ENCODE measurements at regions of chr3 and their contacts with region 1.

Region 1: GRCh38 chr3:183884427-183885296 is at the start of gene PARL:
- DNase-seq: peak; percentile 86 to 98
- H3K4me3 ChIP-seq: peak within 1 kb of the TSS; percentile 96
- H3K27ac ChIP-seq: peak within 1 kb of the TSS; percentile 33
- H3K4me1 ChIP-seq: peaks cover 15% of the 10 kb centered on the region
- H3K27me3 ChIP-seq: no peaks in the 10 kb centered on the region
- CTCF ChIP-seq: peak; percentile 97
- total RNA-seq, gene PARL: 109 and 180 TPM in 2 replicates

Region 2: DNA sequence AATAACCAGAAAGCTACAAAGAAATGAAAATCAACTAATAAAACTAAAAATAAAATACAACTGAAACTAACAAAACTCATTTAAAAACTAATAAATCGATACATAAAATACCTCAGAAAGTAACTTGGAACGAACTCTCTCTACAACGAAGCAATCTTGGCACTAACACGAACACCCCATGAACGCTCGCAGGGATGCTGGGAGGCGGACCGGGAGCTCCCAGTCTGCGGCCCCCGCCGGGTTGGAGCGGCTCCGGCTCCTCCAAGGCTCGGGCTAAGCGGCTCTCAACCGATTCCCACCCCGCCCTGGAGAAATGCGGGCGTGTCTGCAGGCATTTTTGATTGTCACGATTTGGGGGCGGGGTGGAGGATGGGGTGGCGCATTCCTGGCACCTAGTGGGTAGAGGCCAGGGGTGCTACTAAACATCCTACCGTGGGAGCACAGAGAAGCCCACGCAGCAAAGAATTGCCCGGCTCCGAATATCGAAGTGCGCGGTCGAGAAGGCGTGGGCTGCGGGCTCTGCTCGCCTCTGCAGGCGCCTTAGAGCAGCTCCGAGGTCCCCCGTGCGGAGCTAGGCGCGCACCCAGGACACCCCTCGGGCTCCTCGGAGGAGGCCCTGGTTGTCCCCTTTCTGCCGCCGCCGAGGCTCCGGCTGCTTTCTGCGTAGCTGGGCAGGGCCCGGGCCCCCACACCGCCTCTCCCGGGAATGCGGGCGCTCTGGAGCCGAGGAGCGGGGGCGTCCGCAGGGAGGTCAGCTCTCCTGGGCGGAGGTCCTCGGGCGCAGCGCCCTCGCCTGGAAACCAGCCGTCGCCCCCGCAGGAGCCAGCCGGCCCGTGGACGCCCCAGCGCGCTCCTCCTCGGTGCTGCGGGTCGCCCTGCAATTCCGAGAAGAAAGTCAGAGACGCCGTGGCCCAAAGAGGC is 705.8 kb before region 1 on chr3:
- CTCF ChIA-PET with region 1: no interaction called
- POLR2A ChIA-PET with region 1: no interaction called
- intact Hi-C with region 1: loop called (anchors 1 kb)
- DNase-seq: peak; percentile 52 to 73
- H3K4me3 ChIP-seq: peak overlapping the region; percentile 71
- H3K27ac ChIP-seq: no peak overlapping the region
- H3K4me1 ChIP-seq: no peaks in the 10 kb centered on the region; the same call in 1 of the 2 replicates
- H3K27me3 ChIP-seq: no peaks in the 10 kb centered on the region
- CTCF ChIP-seq: peak; percentile 52; the same call in 1 of the 2 replicates

Region 3: DNA sequence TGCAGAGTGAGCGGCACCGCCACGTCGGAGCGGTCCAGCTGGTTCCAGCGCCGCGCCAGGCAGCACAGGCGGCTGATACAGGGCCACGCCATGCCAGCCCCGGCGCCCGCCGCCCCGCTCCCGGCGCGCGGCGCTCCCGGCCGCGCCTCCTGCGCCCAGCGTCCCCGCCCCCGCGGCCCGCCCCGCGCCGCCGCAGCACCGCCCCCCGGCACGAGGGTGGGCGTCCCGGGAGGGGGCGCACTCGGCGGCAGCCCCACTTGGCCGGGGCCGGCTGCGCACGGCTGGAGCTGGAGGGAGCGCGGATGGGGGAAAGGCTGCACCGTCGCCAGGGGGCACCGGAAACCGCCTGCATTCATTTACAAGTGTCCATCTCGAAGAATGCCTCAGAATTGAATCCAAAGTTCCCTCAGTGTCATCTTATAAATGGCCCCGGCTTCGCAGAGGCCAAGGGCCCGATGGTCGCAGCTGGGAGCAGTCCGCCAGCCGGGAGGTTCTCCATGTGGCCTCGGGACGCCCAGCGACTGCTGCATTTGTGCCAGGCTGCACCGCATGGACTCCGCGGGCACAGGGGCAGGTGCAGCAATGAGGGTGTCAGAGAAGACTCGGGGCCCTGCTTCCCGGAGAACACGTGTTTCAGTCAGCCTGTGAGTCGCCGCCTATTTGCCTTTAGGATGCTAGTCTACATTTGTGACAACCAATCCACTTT is 59.1 kb before region 1 on chr3 and contains the start of gene MAP6D1:
- CTCF ChIA-PET with region 1: no interaction called
- POLR2A ChIA-PET with region 1: no interaction called
- intact Hi-C with region 1: loop called (anchors 2 kb)
- DNase-seq: peak in 1 of 2 experiments; percentile 72
- H3K4me3 ChIP-seq: peak within 1 kb of the TSS; percentile 59; the same call in 1 of the 2 replicates
- H3K27ac ChIP-seq: no peak within 1 kb of the TSS
- H3K4me1 ChIP-seq: 0 out of 2 replicates have a peak, but pooled peaks cover 7% of the 10 kb centered on the region
- H3K27me3 ChIP-seq: no peaks in the 10 kb centered on the region
- CTCF ChIP-seq: no peak; the same call in 1 of the 2 replicates
- total RNA-seq, gene MAP6D1: 2.2 TPM in 2 replicates

Region 4: GRCh38 chr3:183844606-183845005 is 40.1 kb before region 1 on chr3:
- CTCF ChIA-PET with region 1: interaction called, 15 read pairs
- POLR2A ChIA-PET with region 1: no interaction called
- intact Hi-C with region 1: no loop called
- DNase-seq: peak in 1 of 2 experiments; percentile 64
- H3K4me3 ChIP-seq: no peak overlapping the region
- H3K27ac ChIP-seq: no peak overlapping the region
- H3K4me1 ChIP-seq: peaks cover 13% of the 10 kb centered on the region
- H3K27me3 ChIP-seq: no peaks in the 10 kb centered on the region
- CTCF ChIP-seq: no peak

Region 5: GRCh38 chr3:183912895-183913579 is 28.4 kb after region 1 on chr3:
- CTCF ChIA-PET with region 1: no interaction called
- POLR2A ChIA-PET with region 1: no interaction called
- intact Hi-C with region 1: no loop called
- DNase-seq: peak; percentile 27 to 79
- H3K4me3 ChIP-seq: no peak overlapping the region
- H3K27ac ChIP-seq: peak overlapping the region; percentile 63
- H3K4me1 ChIP-seq: peaks cover 48% of the 10 kb centered on the region
- H3K27me3 ChIP-seq: no peaks in the 10 kb centered on the region
- CTCF ChIP-seq: no peak

Region 6: GRCh38 chr3:184209146-184209923 is 324.7 kb after region 1 on chr3:
- CTCF ChIA-PET with region 1: no interaction called
- POLR2A ChIA-PET with region 1: no interaction called
- intact Hi-C with region 1: no loop called
- DNase-seq: no peak
- H3K4me3 ChIP-seq: no peak overlapping the region
- H3K27ac ChIP-seq: no peak overlapping the region
- H3K4me1 ChIP-seq: no peaks in the 10 kb centered on the region
- H3K27me3 ChIP-seq: peaks cover 27% of the 10 kb centered on the region
- CTCF ChIP-seq: no peak

Region 7: DNA sequence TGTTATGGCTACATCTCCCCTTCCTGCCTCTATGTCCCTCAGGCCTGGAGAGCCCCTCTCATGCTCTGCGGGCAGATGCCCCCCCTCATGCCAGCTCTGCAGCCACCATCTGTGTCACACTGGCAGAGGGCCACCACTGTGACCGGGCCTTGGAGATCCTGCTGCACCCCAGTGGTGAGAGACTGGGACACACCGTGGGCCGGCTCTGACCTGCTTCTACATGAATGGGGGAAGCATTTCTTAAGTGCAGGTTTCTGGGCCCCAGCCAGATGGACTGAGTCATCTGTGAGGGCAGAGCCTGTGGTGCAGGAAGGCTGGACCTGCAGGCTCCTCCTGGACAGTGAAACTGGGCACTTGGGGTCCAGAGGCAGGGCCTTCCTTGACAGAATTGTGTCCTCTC is 349.6 kb after region 1 on chr3:
- CTCF ChIA-PET with region 1: interaction called, 12 read pairs
- POLR2A ChIA-PET with region 1: no interaction called
- intact Hi-C with region 1: no loop called
- DNase-seq: peak; percentile 92 to 95
- H3K4me3 ChIP-seq: no peak overlapping the region
- H3K27ac ChIP-seq: no peak overlapping the region
- H3K4me1 ChIP-seq: peaks cover 17% of the 10 kb centered on the region
- H3K27me3 ChIP-seq: peaks cover 36% of the 10 kb centered on the region
- CTCF ChIP-seq: peak; percentile 60

Measured in PC-9 (cell line).